MCF 10A (cell line): ENCODE measurements at regions of chr22 and their contacts with region 1.

Region 1: GRCh38 chr22:45577746-45578523 is 75.3 kb downstream of the FBLN1 start:
- DNase-seq: peak; percentile 80
- H3K4me3 Mint-ChIP-seq: no peak overlapping the region
- H3K27ac Mint-ChIP-seq: no peak overlapping the region
- H3K4me1 Mint-ChIP-seq: no peaks in the 10 kb centered on the region
- H3K27me3 Mint-ChIP-seq: no peaks in the 10 kb centered on the region
- CTCF ChIP-seq: peak; percentile 95

Region 2: GRCh38 chr22:45534339-45535192 is 43.4 kb before region 1 on chr22:
- CTCF ChIA-PET with region 1: no interaction called
- POLR2A ChIA-PET with region 1: no interaction called
- intact Hi-C with region 1: no loop called
- DNase-seq: peak; percentile 8
- H3K4me3 Mint-ChIP-seq: no peak overlapping the region
- H3K27ac Mint-ChIP-seq: peak overlapping the region; percentile 42
- H3K4me1 Mint-ChIP-seq: peaks cover 13% of the 10 kb centered on the region
- H3K27me3 Mint-ChIP-seq: no peaks in the 10 kb centered on the region
- CTCF ChIP-seq: no peak

Region 3: GRCh38 chr22:45709866-45710265 is 131.9 kb after region 1 on chr22:
- CTCF ChIA-PET with region 1: no interaction called
- POLR2A ChIA-PET with region 1: no interaction called
- intact Hi-C with region 1: loop called (anchors 10 kb)
- DNase-seq: peak; percentile 44
- H3K4me3 Mint-ChIP-seq: no peak overlapping the region
- H3K27ac Mint-ChIP-seq: no peak overlapping the region
- H3K4me1 Mint-ChIP-seq: peaks cover 22% of the 10 kb centered on the region
- H3K27me3 Mint-ChIP-seq: no peaks in the 10 kb centered on the region
- CTCF ChIP-seq: no peak